BJ (cell line): ENCODE measurements at regions of chr1 and their contacts with region 1.

Region 1: GRCh38 chr1:28248283-28249012 is 10.9 kb upstream of the SESN2 start:
- DNase-seq: no peak
- H3K4me3 ChIP-seq: no peak overlapping the region
- H3K27me3 ChIP-seq: no peaks in the 10 kb centered on the region
- CTCF ChIP-seq: peak; percentile 97

Region 2: GRCh38 chr1:28010969-28011368 is 237.5 kb before region 1 on chr1:
- CTCF ChIA-PET with region 1: no interaction called
- POLR2A ChIA-PET with region 1: no interaction called
- DNase-seq: no peak
- H3K4me3 ChIP-seq: no peak overlapping the region
- H3K27me3 ChIP-seq: no peaks in the 10 kb centered on the region
- CTCF ChIP-seq: no peak

Region 3: DNA sequence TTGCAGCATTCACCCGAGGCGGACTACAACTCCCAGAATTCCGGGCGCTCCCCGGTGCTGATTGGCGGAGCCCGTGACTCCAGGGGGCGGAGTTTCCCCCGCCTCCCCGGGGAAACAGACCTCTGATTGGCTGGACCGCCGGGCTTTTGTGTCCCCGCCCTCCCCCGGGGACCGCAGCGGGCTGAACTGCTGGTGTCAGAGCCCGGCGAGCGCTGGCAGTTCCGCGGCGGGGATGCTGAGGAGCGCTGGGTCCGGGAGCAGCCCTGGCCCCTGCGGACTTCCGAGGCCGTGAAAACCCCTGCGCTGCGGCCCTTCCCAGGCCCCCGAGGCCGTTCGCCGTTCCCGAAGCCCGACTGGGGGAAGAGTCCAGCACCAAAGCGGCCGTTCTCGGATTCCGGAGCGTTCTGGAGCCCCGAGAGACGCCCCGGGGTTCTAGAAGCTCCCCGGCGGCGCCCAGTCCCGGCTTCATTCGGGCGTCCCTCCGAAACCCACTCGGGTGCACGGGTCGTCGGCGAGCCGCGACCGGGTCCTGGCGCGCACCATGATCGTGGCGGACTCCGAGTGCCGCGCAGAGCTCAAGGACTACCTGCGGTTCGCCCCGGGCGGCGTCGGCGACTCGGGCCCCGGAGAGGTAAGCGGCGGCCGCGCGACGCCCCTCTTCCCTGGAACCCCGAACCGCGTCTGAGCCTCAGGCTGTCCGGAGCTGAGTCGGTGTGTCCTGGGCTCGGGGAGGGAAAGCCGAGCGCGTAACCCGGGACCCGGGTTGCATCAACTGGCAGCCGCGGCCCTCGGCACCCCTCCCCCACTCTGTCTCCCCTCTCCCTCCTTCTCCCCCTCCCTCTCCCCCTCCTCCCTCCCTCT is 11.1 kb after region 1 on chr1 and contains the start of gene SESN2:
- CTCF ChIA-PET with region 1: interaction called, 17 read pairs
- POLR2A ChIA-PET with region 1: no interaction called
- DNase-seq: peak; percentile 96
- H3K4me3 ChIP-seq: peak within 1 kb of the TSS; percentile 98
- H3K27me3 ChIP-seq: no peaks in the 10 kb centered on the region
- CTCF ChIP-seq: no peak
- polyA plus RNA-seq, gene SESN2: 35.4 and 53.4 TPM in 2 replicates

Region 4: DNA sequence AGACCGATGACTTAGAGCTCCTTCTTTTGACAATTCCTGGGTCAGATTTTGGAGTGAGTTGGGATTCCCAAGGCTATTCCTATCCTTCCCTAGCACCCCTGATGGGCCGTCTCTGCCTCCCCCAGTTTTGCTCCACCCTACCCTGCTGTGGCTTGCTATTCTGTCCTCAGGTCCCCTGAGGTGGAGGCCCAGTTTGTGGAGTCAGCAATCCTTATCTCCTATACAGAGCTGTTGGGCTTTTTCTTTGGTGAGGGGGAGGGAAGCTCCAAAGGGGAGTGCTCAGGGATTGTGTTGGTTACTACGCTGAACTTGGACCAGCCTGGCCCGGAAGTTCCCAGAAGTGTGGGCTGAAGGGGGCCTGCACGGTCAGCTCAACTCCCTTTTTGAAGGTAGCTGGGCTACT is 18.5 kb after region 1 on chr1:
- CTCF ChIA-PET with region 1: interaction called, 10 read pairs
- POLR2A ChIA-PET with region 1: no interaction called
- DNase-seq: no peak
- H3K4me3 ChIP-seq: no peak overlapping the region
- H3K27me3 ChIP-seq: no peaks in the 10 kb centered on the region
- CTCF ChIP-seq: no peak

Region 5: GRCh38 chr1:28359592-28360239 is 111.3 kb after region 1 on chr1:
- CTCF ChIA-PET with region 1: interaction called, 28 read pairs
- POLR2A ChIA-PET with region 1: no interaction called
- DNase-seq: no peak
- H3K4me3 ChIP-seq: no peak overlapping the region
- H3K27me3 ChIP-seq: no peaks in the 10 kb centered on the region
- CTCF ChIP-seq: peak; percentile 65

Region 6: DNA sequence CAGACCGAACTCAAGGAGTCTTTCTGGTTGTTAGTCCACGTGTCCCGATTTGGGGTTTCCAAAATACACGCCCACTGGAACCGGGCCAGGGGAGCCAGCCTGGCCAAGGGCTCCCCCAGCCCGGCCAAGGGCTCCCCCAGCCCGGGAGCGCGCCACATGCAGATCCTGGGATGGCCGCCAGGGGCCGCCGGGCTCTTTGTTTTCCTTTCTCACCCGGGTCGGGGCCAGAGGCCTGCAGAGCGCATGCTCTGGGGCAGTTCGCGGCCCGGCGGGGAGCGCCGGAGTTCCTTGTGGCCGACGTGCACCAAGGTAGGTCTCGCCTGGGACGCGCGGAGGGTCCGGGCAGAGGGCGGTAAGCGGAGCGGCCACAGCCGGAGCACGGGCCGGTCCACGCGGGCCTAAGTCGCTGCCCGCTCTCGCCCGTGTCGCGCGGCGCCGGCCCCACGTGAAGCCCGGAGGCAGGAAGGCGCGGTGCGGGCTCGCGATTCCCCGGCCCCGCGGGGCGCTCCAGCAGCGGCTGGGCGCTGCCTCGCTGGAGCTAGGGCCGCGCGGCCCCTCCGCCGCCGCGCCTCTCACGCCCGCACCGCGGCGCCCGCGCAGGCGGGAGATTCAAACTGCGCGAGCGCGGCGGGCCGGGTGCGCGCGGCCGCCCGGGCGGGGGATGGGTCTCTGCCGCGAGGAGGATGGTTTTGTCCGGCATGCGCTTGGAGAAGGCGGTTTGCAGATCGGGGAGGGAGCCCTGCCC is 269.7 kb after region 1 on chr1:
- CTCF ChIA-PET with region 1: no interaction called
- POLR2A ChIA-PET with region 1: interaction called, 17 read pairs
- DNase-seq: peak; percentile 35
- H3K4me3 ChIP-seq: peak overlapping the region; percentile 45
- H3K27me3 ChIP-seq: no peaks in the 10 kb centered on the region
- CTCF ChIP-seq: peak; percentile 97